GM10248 (cell line): ENCODE measurements at regions of chr11 and their contacts with region 1.

Region 1: DNA sequence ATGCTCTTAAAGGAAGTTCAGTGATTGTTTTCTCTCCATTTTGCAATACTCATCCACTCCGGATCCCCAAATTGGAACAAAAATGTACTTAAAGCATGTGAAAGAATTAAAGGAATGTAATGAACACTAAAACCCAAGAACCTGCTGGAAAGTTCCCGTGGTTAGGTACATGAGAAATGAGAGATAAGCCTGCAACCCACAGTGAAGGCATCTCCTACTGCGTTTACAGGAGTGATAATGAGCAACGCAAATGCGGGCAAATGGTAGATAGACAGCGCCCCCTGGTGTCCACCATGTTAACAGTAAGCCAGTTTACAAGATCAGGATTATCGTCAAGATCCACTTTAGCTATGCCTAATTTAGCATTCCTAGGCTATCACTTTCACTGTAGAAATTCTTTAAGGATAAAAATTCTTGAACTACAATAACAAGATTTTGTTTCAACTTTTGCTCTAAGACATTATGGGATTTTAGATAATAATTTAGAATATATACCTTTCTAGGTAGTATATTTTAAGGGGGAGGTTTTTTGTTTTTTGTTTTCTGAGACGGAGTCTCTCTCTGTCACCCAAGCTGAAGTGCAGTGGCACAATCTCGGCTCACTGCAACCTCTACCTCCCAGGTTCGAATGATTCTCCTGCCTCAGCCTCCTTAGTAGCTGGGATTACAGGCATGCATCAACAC is 29.9 kb downstream of the ALG9 start:
- DNase-seq: peak; percentile 70
- CTCF ChIP-seq: peak; percentile 82

Region 2: GRCh38 chr11:111565114-111565720 is 276.3 kb before region 1 on chr11:
- CTCF ChIA-PET with region 1: interaction called, 16 read pairs
- POLR2A ChIA-PET with region 1: no interaction called
- DNase-seq: peak; percentile 62
- CTCF ChIP-seq: peak; percentile 68

Region 3: GRCh38 chr11:111586388-111586831 is 255.1 kb before region 1 on chr11:
- CTCF ChIA-PET with region 1: interaction called, 80 read pairs
- POLR2A ChIA-PET with region 1: no interaction called
- DNase-seq: peak; percentile 43
- CTCF ChIP-seq: peak; percentile 53

Region 4: GRCh38 chr11:111797145-111797581 is 44.3 kb before region 1 on chr11:
- CTCF ChIA-PET with region 1: interaction called, 12 read pairs
- POLR2A ChIA-PET with region 1: no interaction called
- DNase-seq: peak; percentile 25
- CTCF ChIP-seq: no peak

Region 5: DNA sequence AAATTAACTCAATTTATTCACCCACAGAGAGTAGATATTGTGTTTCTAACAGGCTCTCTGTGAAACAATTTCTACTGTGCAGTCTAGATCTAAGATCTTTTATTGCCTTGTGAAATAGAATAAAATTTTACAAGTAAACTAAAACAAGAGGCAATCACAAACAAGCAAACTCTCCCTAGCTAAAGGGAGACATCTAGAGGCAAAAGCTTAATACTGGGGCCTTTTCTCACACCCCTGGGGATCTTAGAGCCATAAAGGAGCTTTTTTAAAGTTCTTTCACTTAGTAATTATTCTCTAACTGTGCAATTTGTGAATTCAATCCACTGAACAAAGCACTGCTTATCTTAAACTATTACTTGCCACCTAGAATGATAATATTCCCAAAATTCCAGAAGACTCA is 10.1 kb after region 1 on chr11:
- CTCF ChIA-PET with region 1: interaction called, 20 read pairs
- POLR2A ChIA-PET with region 1: no interaction called
- DNase-seq: no peak
- CTCF ChIP-seq: no peak

Region 6: GRCh38 chr11:111870886-111871692 is 29.6 kb after region 1 on chr11 and contains the start of gene ALG9:
- CTCF ChIA-PET with region 1: interaction called, 11 read pairs
- POLR2A ChIA-PET with region 1: no interaction called
- DNase-seq: peak; percentile 87
- CTCF ChIP-seq: no peak